ENCODE measurements at regions of chr2 and their contacts with region 1.

Region 1: GRCh38 chr2:178414266-178415247 is 36.4 kb downstream of the PRKRA start:
- DNase-seq: peak; percentile 96 to 98 (median 97)
- H3K4me3 ChIP-seq: peak overlapping the region in 6 of 7 experiments; percentile 64 to 93 (median 80)
- H3K27ac ChIP-seq: peak overlapping the region; percentile 89 to 95
- H3K4me1 ChIP-seq: peaks cover 6 to 17% (median 10%) of the 10 kb centered on the region in 4 experiments
- H3K27me3 ChIP-seq: no peaks in the 10 kb centered on the region

Region 2: DNA sequence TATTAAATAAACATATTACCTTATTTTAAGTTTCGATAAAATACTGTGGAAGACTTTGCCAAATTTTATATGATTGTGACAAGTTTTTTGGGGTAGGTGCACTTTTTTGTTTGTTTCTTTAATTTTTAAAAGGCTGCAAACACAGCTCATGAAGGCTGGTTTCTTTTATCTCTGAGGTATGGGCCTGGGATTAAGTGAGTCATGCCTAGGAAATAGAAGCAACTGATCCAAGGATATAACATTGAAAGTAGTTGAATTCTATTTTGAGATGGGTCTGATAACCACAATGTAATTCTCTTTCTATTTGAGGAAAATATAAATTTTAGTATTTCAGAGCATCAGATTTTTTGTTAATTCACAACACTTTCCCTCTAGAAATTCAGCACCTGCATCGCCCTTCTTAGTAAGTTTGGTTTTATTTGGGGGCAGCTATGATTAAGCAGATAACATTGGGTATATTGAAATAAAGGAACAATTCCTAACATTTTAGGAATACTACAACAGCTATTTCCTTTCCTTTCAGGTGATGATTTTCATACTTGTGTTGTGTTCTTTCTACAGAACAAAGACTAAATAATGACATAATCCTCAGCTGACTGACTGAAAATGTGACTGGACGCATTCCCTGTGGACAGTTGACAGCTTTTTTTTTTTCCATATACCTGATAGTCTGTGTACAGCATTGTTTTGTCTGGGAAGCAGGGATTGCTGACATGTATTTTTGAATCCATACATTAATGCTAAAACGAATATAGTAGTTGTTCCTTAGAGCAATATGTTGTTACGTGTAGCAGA is 285.5 kb before region 1 on chr2:
- CTCF ChIA-PET with region 1: interaction called, 13 read pairs
- POLR2A ChIA-PET with region 1: interaction called, 3 read pairs
- DNase-seq: no peak
- H3K4me3 ChIP-seq: no peak overlapping the region
- H3K27ac ChIP-seq: no peak overlapping the region
- H3K4me1 ChIP-seq: no peaks in the 10 kb centered on the region
- H3K27me3 ChIP-seq: no peaks in the 10 kb centered on the region

Region 3: GRCh38 chr2:178306352-178307073 is 108.0 kb before region 1 on chr2:
- CTCF ChIA-PET with region 1: interaction called, 20 read pairs
- POLR2A ChIA-PET with region 1: interaction called, 3 read pairs
- DNase-seq: peak; percentile 63 to 76 (median 73)
- H3K4me3 ChIP-seq: no peak overlapping the region
- H3K27ac ChIP-seq: no peak overlapping the region
- H3K4me1 ChIP-seq: no peaks in the 10 kb centered on the region
- H3K27me3 ChIP-seq: no peaks in the 10 kb centered on the region

Region 4: GRCh38 chr2:178397002-178397605 is 17.5 kb before region 1 on chr2:
- CTCF ChIA-PET with region 1: interaction called, 278 read pairs
- POLR2A ChIA-PET with region 1: no interaction called
- DNase-seq: peak; percentile 60 to 68 (median 66)
- H3K4me3 ChIP-seq: no peak overlapping the region
- H3K27ac ChIP-seq: no peak overlapping the region
- H3K4me1 ChIP-seq: no peaks in the 10 kb centered on the region
- H3K27me3 ChIP-seq: no peaks in the 10 kb centered on the region

Region 5: DNA sequence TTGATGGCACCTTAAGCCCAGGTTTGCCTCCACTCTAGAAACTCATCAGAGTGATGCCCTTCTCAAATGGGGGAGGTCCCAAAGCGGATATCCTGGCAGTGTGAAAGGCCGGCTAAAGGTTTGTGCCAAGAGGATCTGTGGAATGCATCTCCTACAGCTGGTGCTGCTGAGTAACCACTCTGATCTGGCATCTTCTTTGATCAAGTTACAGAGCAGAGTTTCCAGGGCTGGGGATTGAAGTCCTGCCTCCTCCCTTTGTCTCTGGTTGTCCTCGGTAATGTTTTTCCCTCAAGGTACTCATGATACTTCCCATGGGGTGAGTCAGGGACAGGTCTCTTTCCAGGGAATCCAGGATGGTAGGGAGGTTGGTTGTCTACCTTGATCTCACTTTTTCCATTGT is 11.8 kb after region 1 on chr2:
- CTCF ChIA-PET with region 1: interaction called, 20 read pairs
- POLR2A ChIA-PET with region 1: no interaction called
- DNase-seq: no peak
- H3K4me3 ChIP-seq: no peak overlapping the region
- H3K27ac ChIP-seq: no peak overlapping the region
- H3K4me1 ChIP-seq: no peaks in the 10 kb centered on the region
- H3K27me3 ChIP-seq: no peaks in the 10 kb centered on the region

Region 6: GRCh38 chr2:178506524-178506923 is 92.0 kb after region 1 on chr2:
- CTCF ChIA-PET with region 1: no interaction called
- POLR2A ChIA-PET with region 1: no interaction called
- DNase-seq: no peak
- H3K4me3 ChIP-seq: no peak overlapping the region
- H3K27ac ChIP-seq: no peak overlapping the region
- H3K4me1 ChIP-seq: no peaks in the 10 kb centered on the region
- H3K27me3 ChIP-seq: no peaks in the 10 kb centered on the region

Region 7: DNA sequence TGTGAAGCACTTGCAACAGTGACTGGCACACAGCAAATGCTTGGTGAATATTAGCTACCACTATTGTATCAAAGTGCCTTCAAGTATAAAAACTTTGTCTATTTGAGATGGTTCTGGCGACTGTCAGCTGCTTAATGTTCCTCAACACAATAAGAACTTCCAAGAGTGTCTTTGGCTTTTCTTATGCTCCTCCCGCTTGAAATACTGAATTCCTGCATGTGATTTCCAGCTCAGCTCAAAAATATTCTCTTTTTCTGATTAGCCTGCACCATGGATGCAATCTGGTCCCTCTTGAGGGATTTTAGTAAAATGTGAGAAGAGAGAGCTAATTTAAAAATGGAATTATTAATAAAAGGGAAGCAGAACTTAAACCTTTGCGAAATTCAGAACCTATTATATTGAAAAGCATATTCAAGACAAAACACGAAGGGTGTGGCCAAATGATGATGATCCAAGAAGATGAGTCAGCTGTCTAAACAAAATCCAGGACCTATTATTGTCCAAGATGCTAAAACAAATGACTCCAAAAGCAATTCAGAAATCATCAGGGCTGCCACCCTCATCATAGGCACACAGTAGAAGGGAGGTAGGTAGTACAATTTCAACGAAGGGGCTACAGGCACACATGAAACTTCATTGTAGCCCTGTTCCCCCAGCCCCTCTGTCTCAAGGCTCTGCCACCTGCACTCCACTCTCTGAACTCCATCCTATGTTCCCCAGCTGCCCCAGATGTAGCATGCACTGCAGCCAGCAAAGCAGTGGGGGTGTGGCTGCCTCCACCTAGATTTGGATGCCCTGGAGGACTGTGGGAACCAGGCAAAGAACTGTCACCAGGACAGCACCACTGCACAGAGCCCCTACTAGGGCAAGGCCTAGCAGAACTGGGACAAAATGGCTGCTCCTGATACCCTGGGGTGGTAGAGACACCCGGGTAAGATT is 1256.8 kb after region 1 on chr2:
- CTCF ChIA-PET with region 1: no interaction called
- POLR2A ChIA-PET with region 1: no interaction called
- DNase-seq: no peak
- H3K4me3 ChIP-seq: no peak overlapping the region
- H3K27ac ChIP-seq: no peak overlapping the region
- H3K4me1 ChIP-seq: no peaks in the 10 kb centered on the region
- H3K27me3 ChIP-seq: no peaks in the 10 kb centered on the region

Measured in common myeloid progenitor, CD34-positive (primary cell).